ENCODE measurements at regions of chr10 and their contacts with region 1.

Region 1: GRCh38 chr10:120735773-120736371 is 115.3 kb upstream of the WDR11 start:
- DNase-seq: no peak

Region 2: GRCh38 chr10:120423431-120424197 is 312.3 kb before region 1 on chr10:
- intact Hi-C with region 1: loop called (anchors 5 kb)
- DNase-seq: peak in 8 of 10 donors; percentile 30 to 86 (median 64)

Region 3: GRCh38 chr10:120436431-120437112 is 299.3 kb before region 1 on chr10:
- intact Hi-C with region 1: loop called (anchors 5 kb)
- DNase-seq: peak in 1 of 10 donors; percentile 45

Region 4: GRCh38 chr10:120641695-120642094 is 94.2 kb before region 1 on chr10:
- intact Hi-C with region 1: no loop called
- DNase-seq: no peak

Measured in posterior cingulate gyrus (tissue), 11 donors.